ENCODE measurements at regions of chr3 and their contacts with region 1.

Region 1: GRCh38 chr3:108589146-108589997 is at the starts of genes CIP2A and DZIP3:
- DNase-seq: peak; percentile 92 to 97
- H3K4me3 ChIP-seq: peak within 1 kb of the TSS; percentile 74
- H3K27ac ChIP-seq: peak within 1 kb of the TSS; percentile 93
- H3K4me1 ChIP-seq: peaks cover 36% of the 10 kb centered on the region
- H3K27me3 ChIP-seq: no peaks in the 10 kb centered on the region
- CTCF ChIP-seq: no peak
- total RNA-seq, gene CIP2A: 40.6 and 41.1 TPM in 2 replicates
- total RNA-seq, gene DZIP3: 11.7 and 14.5 TPM in 2 replicates

Region 2: GRCh38 chr3:107690522-107691138 is 898.7 kb before region 1 on chr3:
- CTCF ChIA-PET with region 1: no interaction called
- POLR2A ChIA-PET with region 1: no interaction called
- intact Hi-C with region 1: no loop called
- DNase-seq: peak in 1 of 2 experiments; percentile 66
- H3K4me3 ChIP-seq: no peak overlapping the region
- H3K27ac ChIP-seq: no peak overlapping the region
- H3K4me1 ChIP-seq: no peaks in the 10 kb centered on the region
- H3K27me3 ChIP-seq: no peaks in the 10 kb centered on the region
- CTCF ChIP-seq: peak; percentile 87

Region 3: DNA sequence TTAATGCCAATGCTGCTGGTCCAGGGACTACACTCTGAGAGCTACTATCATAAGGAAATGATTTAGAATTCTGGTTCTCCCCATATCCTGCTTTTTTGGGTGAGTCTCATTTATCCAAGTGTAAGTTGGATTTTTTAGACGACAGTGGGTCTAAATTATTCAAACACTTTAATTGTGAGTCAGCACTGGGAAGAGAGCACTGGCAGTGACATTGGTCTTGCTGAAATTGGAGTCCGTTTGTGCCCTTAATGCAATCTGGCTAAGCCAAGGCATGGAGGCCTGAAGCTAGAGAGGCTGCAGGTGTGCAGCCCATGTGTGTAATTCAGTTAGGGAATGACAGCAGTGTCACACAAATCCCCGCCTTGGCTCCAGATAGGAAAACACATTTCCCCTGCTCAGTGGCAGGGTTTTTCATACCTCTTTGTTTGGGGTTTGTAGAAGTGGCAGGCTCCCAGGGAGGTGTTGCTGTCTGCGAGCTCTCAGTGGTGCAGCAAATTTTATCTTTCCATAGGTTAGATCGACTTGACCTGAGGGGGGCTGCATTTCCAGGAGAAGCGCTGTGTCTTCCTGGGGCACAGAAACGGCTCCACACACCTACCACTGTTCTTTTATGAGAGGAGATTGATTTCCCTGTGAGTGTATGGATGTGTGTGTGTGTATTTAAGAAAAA is 696.3 kb before region 1 on chr3:
- CTCF ChIA-PET with region 1: interaction called, 10 read pairs
- POLR2A ChIA-PET with region 1: no interaction called
- intact Hi-C with region 1: no loop called
- DNase-seq: no peak
- H3K4me3 ChIP-seq: no peak overlapping the region
- H3K27ac ChIP-seq: no peak overlapping the region
- H3K4me1 ChIP-seq: no peaks in the 10 kb centered on the region; the same call in 1 of the 2 replicates
- H3K27me3 ChIP-seq: no peaks in the 10 kb centered on the region
- CTCF ChIP-seq: no peak

Region 4: GRCh38 chr3:108608750-108609149 is 19.4 kb after region 1 on chr3:
- CTCF ChIA-PET with region 1: no interaction called
- POLR2A ChIA-PET with region 1: interaction called, 9 read pairs
- intact Hi-C with region 1: loop called (anchors 1 kb)
- DNase-seq: no peak
- H3K4me3 ChIP-seq: no peak overlapping the region
- H3K27ac ChIP-seq: no peak overlapping the region
- H3K4me1 ChIP-seq: peaks cover 4% of the 10 kb centered on the region
- H3K27me3 ChIP-seq: no peaks in the 10 kb centered on the region
- CTCF ChIP-seq: no peak

Region 5: GRCh38 chr3:108879916-108880315 is 290.5 kb after region 1 on chr3:
- CTCF ChIA-PET with region 1: interaction called, 11 read pairs
- POLR2A ChIA-PET with region 1: no interaction called
- intact Hi-C with region 1: no loop called
- DNase-seq: peak in 1 of 2 experiments; percentile 18
- H3K4me3 ChIP-seq: no peak overlapping the region
- H3K27ac ChIP-seq: no peak overlapping the region
- H3K4me1 ChIP-seq: no peaks in the 10 kb centered on the region
- H3K27me3 ChIP-seq: no peaks in the 10 kb centered on the region
- CTCF ChIP-seq: peak; percentile 71

Region 6: GRCh38 chr3:108914774-108915641 is 325.6 kb after region 1 on chr3:
- CTCF ChIA-PET with region 1: interaction called, 8 read pairs
- POLR2A ChIA-PET with region 1: no interaction called
- intact Hi-C with region 1: loop called (anchors 10 kb)
- DNase-seq: peak; percentile 54 to 61
- H3K4me3 ChIP-seq: no peak overlapping the region
- H3K27ac ChIP-seq: no peak overlapping the region
- H3K4me1 ChIP-seq: peaks cover 6% of the 10 kb centered on the region; the same call in 1 of the 2 replicates
- H3K27me3 ChIP-seq: no peaks in the 10 kb centered on the region
- CTCF ChIP-seq: peak; percentile 99